ENCODE measurements at regions of chr1 and their contacts with region 1.

Region 1: GRCh38 chr1:235415008-235415904 is 48.0 kb downstream of the TBCE start:
- DNase-seq: peak; percentile 76
- H3K4me3 Mint-ChIP-seq: no peak overlapping the region
- H3K27ac Mint-ChIP-seq: no peak overlapping the region
- H3K4me1 Mint-ChIP-seq: peaks cover 4% of the 10 kb centered on the region
- H3K27me3 Mint-ChIP-seq: no peaks in the 10 kb centered on the region

Region 2: DNA sequence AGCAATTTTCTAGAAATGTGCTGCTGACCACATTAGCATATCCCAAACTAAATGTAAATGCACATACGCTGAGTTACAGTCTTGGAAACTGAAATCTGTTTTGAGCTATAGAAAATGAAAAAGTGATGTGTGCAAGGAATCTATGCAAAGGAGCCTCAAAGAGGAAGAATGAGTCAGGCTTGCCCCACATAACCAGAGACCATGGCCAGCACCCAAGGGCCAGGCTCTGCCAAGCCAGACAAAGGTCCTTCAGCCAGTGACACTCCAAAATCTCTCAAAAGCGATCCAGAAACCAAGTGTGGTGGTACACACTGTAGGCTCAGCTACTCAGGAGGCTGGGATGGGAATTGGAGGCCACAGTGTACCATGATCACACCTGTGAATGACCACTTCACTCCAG is 481.8 kb before region 1 on chr1:
- CTCF ChIA-PET with region 1: no interaction called
- intact Hi-C with region 1: no loop called
- DNase-seq: peak; percentile 61
- H3K4me3 Mint-ChIP-seq: no peak overlapping the region
- H3K27ac Mint-ChIP-seq: peak overlapping the region; percentile 84
- H3K4me1 Mint-ChIP-seq: peaks cover 58% of the 10 kb centered on the region
- H3K27me3 Mint-ChIP-seq: no peaks in the 10 kb centered on the region

Region 3: GRCh38 chr1:235105051-235106043 is 309.9 kb before region 1 on chr1:
- CTCF ChIA-PET with region 1: interaction called, 31 read pairs
- intact Hi-C with region 1: loop called (anchors 1 kb)
- DNase-seq: no peak
- H3K4me3 Mint-ChIP-seq: no peak overlapping the region
- H3K27ac Mint-ChIP-seq: no peak overlapping the region
- H3K4me1 Mint-ChIP-seq: peaks cover 44% of the 10 kb centered on the region
- H3K27me3 Mint-ChIP-seq: no peaks in the 10 kb centered on the region

Region 4: GRCh38 chr1:235239851-235240250 is 175.4 kb before region 1 on chr1:
- CTCF ChIA-PET with region 1: interaction called, 14 read pairs
- intact Hi-C with region 1: no loop called
- DNase-seq: no peak
- H3K4me3 Mint-ChIP-seq: no peak overlapping the region
- H3K27ac Mint-ChIP-seq: no peak overlapping the region
- H3K4me1 Mint-ChIP-seq: peaks cover 30% of the 10 kb centered on the region
- H3K27me3 Mint-ChIP-seq: no peaks in the 10 kb centered on the region

Region 5: DNA sequence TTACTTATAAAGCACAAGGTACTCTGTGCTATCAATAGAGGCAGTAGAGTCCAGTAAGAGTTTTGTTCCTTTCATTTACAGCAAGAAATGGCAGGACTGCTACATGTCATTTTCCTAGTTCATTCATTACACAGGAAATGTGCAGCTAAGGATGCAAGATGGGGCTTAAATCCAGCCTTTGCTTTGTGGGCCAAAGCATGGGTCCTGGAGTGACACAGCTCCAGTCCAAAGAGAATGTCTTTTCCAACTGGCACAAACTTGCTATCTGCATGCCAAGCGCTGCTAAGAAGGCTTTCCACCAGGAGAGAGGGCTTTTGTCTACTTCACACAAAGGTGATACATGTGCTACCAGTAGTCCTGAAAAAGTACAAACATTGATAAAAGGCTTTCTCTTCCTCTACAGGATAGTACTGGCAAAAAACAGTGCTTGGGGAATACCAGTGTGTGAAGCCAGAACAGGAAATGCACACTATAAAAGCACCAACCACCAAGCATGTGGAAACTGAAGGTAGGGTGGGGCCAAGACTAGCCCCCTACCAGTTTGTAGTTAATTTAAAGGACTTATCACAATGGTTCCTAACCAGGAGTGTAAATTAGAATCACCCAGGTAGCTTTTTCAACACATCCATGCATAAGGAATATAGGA is 156.0 kb before region 1 on chr1:
- CTCF ChIA-PET with region 1: interaction called, 27 read pairs
- intact Hi-C with region 1: no loop called
- DNase-seq: no peak
- H3K4me3 Mint-ChIP-seq: no peak overlapping the region
- H3K27ac Mint-ChIP-seq: peak overlapping the region; percentile 19
- H3K4me1 Mint-ChIP-seq: peaks cover 54% of the 10 kb centered on the region
- H3K27me3 Mint-ChIP-seq: no peaks in the 10 kb centered on the region

Region 6: DNA sequence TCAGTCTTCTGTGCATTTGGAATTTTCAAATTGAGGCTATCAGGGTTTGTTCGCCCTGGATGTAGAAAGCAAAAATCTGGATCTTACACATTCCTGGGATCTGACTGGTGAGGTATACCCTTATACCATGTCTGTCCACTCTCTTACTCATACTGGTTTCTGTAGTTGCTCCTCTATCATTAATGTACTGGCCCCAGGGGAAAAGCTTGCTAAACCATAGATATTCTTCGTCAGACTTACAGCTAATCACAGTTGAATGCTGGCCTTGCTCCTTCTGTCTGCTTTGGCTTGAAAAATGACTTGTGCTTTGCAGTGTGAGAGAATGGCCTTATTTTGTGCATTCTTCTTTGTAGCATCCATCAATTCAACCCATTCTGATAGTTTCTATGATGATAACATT is 17.5 kb before region 1 on chr1:
- CTCF ChIA-PET with region 1: interaction called, 16 read pairs
- intact Hi-C with region 1: no loop called
- DNase-seq: no peak
- H3K4me3 Mint-ChIP-seq: no peak overlapping the region
- H3K27ac Mint-ChIP-seq: no peak overlapping the region
- H3K4me1 Mint-ChIP-seq: peaks cover 2% of the 10 kb centered on the region
- H3K27me3 Mint-ChIP-seq: no peaks in the 10 kb centered on the region

Region 7: GRCh38 chr1:235483090-235483489 is 67.8 kb after region 1 on chr1:
- CTCF ChIA-PET with region 1: no interaction called
- intact Hi-C with region 1: no loop called
- DNase-seq: no peak
- H3K4me3 Mint-ChIP-seq: no peak overlapping the region
- H3K27ac Mint-ChIP-seq: no peak overlapping the region
- H3K4me1 Mint-ChIP-seq: no peaks in the 10 kb centered on the region
- H3K27me3 Mint-ChIP-seq: no peaks in the 10 kb centered on the region

Region 8: GRCh38 chr1:235504496-235505222 is 89.4 kb after region 1 on chr1:
- CTCF ChIA-PET with region 1: no interaction called
- intact Hi-C with region 1: no loop called
- DNase-seq: peak; percentile 99
- H3K4me3 Mint-ChIP-seq: peak overlapping the region; percentile 97
- H3K27ac Mint-ChIP-seq: peak overlapping the region; percentile 97
- H3K4me1 Mint-ChIP-seq: peaks cover 31% of the 10 kb centered on the region
- H3K27me3 Mint-ChIP-seq: no peaks in the 10 kb centered on the region